Endothelial cell of umbilical vein (primary cell): ENCODE measurements at regions of chr3 and their contacts with region 1.

Region 1: DNA sequence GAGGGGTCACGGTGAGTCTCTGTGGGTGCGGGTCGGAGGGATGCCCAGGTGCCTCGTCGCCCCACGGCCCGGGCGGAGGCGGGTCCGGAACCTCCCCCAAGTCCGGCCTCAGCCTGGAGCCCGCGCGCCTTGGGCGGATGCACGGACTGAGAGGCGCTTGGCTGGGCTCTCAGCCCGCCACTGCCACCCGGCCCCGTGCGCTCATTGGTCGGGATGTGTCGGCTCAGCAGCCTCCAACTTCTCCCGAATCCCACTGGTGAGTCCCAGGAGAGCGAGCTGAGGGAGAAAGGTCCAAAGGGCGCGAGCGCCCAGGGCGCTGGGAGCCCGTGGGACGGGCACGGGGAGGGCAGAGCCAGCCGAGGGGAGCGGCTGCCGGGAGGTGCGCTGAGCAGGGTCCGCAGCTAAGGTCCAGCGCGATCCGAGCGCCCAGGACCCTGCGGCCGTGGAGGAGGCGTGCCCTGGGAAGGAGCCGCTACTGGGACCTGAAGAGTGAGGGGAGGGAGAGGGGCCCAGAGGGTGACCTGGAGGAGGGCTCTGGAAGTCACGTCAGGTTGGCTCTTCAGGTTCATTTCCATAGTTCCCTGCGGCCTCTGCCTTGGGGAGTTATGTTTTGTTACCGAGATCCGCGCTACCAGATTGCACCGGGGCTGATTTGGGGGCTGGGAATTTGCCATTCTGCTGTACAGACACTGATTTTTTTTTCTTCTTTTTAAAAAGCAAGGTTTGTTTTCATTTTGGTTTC is at the start of gene MME:
- DNase-seq: peak; percentile 69
- H3K4me3 ChIP-seq: peak within 1 kb of the TSS; percentile 71 to 92 (median 89)
- H3K27ac ChIP-seq: peak within 1 kb of the TSS; percentile 34
- H3K4me1 ChIP-seq: peaks cover 19% of the 10 kb centered on the region
- H3K27me3 ChIP-seq: no peaks in the 10 kb centered on the region
- CTCF ChIP-seq: no peak
- POLR2A ChIP-seq: no peak
- total RNA-seq, gene MME: 8.4 and 10.5 TPM in 2 replicates

Region 2: GRCh38 chr3:154818676-154819255 is 261.2 kb before region 1 on chr3:
- CTCF ChIA-PET with region 1: no interaction called
- POLR2A ChIA-PET with region 1: no interaction called
- dilution Hi-C with region 1: no loop called
- intact Hi-C with region 1: no loop called
- DNase-seq: no peak
- H3K4me3 ChIP-seq: no peak overlapping the region
- H3K27ac ChIP-seq: no peak overlapping the region
- H3K4me1 ChIP-seq: no peaks in the 10 kb centered on the region
- H3K27me3 ChIP-seq: no peaks in the 10 kb centered on the region
- CTCF ChIP-seq: no peak
- POLR2A ChIP-seq: no peak

Region 3: GRCh38 chr3:155093261-155093660 is 13.3 kb after region 1 on chr3:
- CTCF ChIA-PET with region 1: interaction called, 3 read pairs
- POLR2A ChIA-PET with region 1: no interaction called
- dilution Hi-C with region 1: no loop called
- intact Hi-C with region 1: loop called (anchors 1 kb)
- DNase-seq: no peak
- H3K4me3 ChIP-seq: no peak overlapping the region
- H3K27ac ChIP-seq: no peak overlapping the region
- H3K4me1 ChIP-seq: no peaks in the 10 kb centered on the region
- H3K27me3 ChIP-seq: no peaks in the 10 kb centered on the region
- CTCF ChIP-seq: no peak
- POLR2A ChIP-seq: no peak

Region 4: GRCh38 chr3:156233876-156234275 is 1154.0 kb after region 1 on chr3:
- CTCF ChIA-PET with region 1: no interaction called
- POLR2A ChIA-PET with region 1: no interaction called
- dilution Hi-C with region 1: no loop called
- intact Hi-C with region 1: no loop called
- DNase-seq: no peak
- H3K4me3 ChIP-seq: no peak overlapping the region
- H3K27ac ChIP-seq: no peak overlapping the region
- H3K4me1 ChIP-seq: no peaks in the 10 kb centered on the region
- H3K27me3 ChIP-seq: no peaks in the 10 kb centered on the region
- CTCF ChIP-seq: no peak
- POLR2A ChIP-seq: no peak